Calu3 (cell line): ENCODE measurements at regions of chr6 and their contacts with region 1.

Region 1: DNA sequence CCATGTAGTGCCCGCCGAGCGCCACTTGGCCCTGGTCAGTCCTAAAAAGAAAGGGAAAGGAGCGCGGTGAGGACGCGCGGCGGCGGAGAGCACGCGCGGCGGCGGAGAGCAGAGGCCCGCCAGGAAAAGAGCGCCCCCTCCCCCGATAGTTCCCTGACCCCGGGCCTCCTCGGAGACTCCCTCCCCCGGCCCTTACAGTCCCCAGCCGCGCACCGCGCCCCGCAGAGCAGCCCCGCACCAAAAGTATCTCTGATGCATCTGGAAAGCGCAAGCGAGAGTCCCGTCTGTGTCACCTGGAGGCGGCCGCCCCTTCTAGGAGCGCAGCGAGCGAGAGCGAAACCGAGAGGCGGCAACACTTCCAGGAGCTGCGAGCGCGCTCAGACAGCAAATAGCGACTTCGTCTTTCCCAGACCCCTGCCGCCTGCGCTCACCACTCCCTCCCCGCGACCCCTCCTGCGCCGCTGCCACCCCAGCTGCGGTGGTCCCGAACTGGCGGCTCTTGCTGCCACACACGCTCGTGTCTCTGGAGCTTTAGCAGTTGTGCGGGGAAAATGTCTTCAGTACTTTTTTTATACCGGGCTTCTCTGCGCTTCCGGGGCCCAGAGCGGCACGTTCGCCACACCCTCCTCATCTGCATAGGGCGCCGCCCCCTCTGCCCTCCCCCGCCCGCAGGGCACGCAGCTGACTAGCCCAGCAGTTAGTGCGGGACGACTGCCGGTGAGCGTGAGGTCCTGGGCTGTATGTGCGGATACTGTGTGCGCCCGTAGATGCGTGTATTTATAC is at the start of gene TENT5A:
- DNase-seq: peak; percentile 94
- H3K4me3 Mint-ChIP-seq: peak within 1 kb of the TSS; percentile 98
- H3K27ac Mint-ChIP-seq: peak within 1 kb of the TSS; percentile 54
- H3K4me1 Mint-ChIP-seq: peaks cover 33% of the 10 kb centered on the region
- H3K27me3 Mint-ChIP-seq: peaks cover 9% of the 10 kb centered on the region
- CTCF ChIP-seq: no peak
- total RNA-seq, gene TENT5A: 9.7 and 17.4 TPM in 2 replicates

Region 2: DNA sequence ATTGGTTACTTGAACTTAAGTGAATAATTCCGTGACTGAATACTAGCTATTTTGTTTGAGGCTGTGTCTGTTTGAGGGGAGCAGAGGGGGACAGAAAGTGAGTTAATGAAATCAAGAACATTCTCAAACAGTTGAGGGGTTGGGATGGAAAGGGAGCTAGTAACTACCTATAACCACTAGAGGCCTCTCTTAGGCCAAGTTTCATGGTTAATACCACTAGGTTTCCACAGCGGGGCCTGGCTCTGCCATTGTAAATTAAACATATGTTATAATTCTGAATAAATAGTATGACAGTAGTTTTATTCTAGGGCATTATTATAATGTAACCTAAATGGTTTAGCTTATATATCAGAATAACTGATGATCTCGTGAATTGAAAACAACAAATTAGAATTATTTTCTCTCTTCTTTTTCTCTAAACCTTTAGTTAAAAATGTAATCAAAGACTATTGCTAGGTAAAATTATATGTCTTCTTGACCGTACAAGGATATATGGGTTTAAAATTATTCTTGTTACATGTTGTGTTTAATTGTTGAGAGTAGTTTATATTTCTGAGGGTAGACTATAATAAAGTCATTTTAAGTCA is 1537.8 kb before region 1 on chr6:
- CTCF ChIA-PET with region 1: no interaction called
- intact Hi-C with region 1: loop called (anchors 10 kb)
- DNase-seq: peak; percentile 39
- H3K4me3 Mint-ChIP-seq: no peak overlapping the region
- H3K27ac Mint-ChIP-seq: no peak overlapping the region
- H3K4me1 Mint-ChIP-seq: peaks cover 22% of the 10 kb centered on the region
- H3K27me3 Mint-ChIP-seq: no peaks in the 10 kb centered on the region
- CTCF ChIP-seq: peak; percentile 56

Region 3: DNA sequence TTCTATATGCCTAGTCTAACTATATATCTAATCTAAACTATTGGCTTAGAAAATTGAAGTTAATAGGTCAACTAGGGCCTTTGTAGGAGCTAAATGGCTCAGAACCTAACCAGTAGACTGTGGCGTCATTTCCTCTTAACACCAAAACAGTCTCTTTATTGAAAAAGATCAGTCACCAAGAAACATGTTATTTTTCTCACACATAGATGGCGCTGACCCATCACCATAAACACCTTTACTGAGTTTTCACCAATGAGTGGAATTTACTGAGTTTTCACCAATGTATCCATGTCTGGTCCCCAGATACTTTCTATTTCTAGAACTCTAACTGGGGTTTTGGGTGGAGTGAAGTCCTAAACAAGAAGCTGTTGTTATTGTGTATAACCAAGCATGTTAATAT is 1009.8 kb before region 1 on chr6:
- CTCF ChIA-PET with region 1: no interaction called
- intact Hi-C with region 1: loop called (anchors 5 kb)
- DNase-seq: peak; percentile 13
- H3K4me3 Mint-ChIP-seq: no peak overlapping the region
- H3K27ac Mint-ChIP-seq: no peak overlapping the region
- H3K4me1 Mint-ChIP-seq: no peaks in the 10 kb centered on the region
- H3K27me3 Mint-ChIP-seq: no peaks in the 10 kb centered on the region
- CTCF ChIP-seq: peak; percentile 38

Region 4: DNA sequence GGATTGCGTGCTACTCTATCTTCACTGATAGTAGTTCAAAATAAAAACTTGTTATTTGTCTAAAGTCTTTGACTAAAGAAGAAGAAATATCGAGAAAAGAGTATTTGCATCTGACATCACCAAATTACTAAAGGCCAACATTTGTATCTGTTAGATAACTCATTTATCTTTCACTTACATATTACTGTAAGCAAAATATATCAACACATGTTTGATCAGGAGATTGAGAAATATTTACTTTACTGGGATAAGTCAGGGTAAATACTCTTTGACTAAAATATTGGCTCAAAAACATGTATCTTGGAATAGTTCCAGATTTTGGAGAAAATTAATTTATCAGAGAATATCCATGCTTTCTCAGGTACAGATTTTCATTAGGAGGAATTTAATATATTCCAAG is 305.8 kb before region 1 on chr6:
- CTCF ChIA-PET with region 1: no interaction called
- intact Hi-C with region 1: loop called (anchors 5 kb)
- DNase-seq: no peak
- H3K4me3 Mint-ChIP-seq: no peak overlapping the region
- H3K27ac Mint-ChIP-seq: no peak overlapping the region
- H3K4me1 Mint-ChIP-seq: peaks cover 15% of the 10 kb centered on the region
- H3K27me3 Mint-ChIP-seq: no peaks in the 10 kb centered on the region
- CTCF ChIP-seq: no peak

Region 5: DNA sequence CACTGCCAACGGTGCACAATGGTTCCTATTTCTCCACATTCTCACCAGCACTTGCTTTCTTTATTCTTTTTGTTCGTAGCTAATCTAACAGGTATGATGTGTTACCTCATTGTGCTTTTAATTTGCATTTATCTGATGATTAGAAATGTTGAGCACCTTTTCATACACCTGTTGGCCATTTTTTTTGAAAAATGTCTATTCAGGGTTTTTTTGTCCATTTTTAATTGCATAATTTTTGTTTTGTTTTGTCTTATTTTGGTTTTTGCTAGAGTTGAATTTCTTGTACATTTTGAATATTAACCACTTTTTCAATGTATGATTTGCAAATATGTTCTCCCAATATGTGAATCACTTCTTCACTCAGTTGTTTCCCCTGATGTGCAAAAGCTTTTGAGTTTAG is 150.4 kb before region 1 on chr6:
- CTCF ChIA-PET with region 1: no interaction called
- intact Hi-C with region 1: no loop called
- DNase-seq: no peak
- H3K4me3 Mint-ChIP-seq: no peak overlapping the region
- H3K27ac Mint-ChIP-seq: no peak overlapping the region
- H3K4me1 Mint-ChIP-seq: no peaks in the 10 kb centered on the region
- H3K27me3 Mint-ChIP-seq: no peaks in the 10 kb centered on the region
- CTCF ChIP-seq: no peak

Region 6: GRCh38 chr6:81668615-81669047 is 83.7 kb before region 1 on chr6:
- CTCF ChIA-PET with region 1: no interaction called
- intact Hi-C with region 1: no loop called
- DNase-seq: no peak
- H3K4me3 Mint-ChIP-seq: no peak overlapping the region
- H3K27ac Mint-ChIP-seq: no peak overlapping the region
- H3K4me1 Mint-ChIP-seq: no peaks in the 10 kb centered on the region
- H3K27me3 Mint-ChIP-seq: no peaks in the 10 kb centered on the region
- CTCF ChIP-seq: no peak

Region 7: DNA sequence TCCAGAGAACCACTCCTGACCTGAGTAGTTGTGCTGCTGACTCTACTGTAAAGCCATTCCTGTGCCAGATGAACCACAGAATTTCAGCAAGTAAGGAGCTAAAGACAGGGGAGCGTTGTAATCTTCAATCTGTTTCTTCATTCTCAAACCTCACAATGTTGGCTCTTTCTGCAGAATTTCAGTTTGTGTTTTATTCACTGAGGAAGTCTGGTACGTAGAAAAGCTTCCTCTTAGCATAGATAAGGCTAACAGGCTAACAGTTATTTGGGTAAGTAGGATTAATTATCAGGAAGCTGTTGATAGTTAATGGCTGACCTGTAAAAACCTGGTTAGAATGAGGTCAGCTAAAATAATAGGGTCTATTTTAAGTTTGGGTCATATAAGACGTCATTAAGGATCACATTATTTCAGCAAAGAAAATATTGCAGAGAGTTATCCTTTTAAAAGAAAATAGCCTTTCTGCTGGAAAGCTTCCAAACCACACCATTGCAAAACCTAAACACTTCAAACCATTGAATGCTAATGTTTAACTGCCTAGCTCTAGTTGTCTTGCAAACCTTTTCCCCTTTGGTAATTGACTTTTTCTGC is 14.2 kb after region 1 on chr6:
- CTCF ChIA-PET with region 1: interaction called, 14 read pairs
- intact Hi-C with region 1: no loop called
- DNase-seq: peak; percentile 67
- H3K4me3 Mint-ChIP-seq: peak overlapping the region; percentile 29
- H3K27ac Mint-ChIP-seq: peak overlapping the region; percentile 78
- H3K4me1 Mint-ChIP-seq: peaks cover 28% of the 10 kb centered on the region
- H3K27me3 Mint-ChIP-seq: peaks cover 13% of the 10 kb centered on the region
- CTCF ChIP-seq: no peak

Region 8: GRCh38 chr6:81777586-81778268 is 25.4 kb after region 1 on chr6:
- CTCF ChIA-PET with region 1: no interaction called
- intact Hi-C with region 1: no loop called
- DNase-seq: no peak
- H3K4me3 Mint-ChIP-seq: no peak overlapping the region
- H3K27ac Mint-ChIP-seq: no peak overlapping the region
- H3K4me1 Mint-ChIP-seq: peaks cover 34% of the 10 kb centered on the region
- H3K27me3 Mint-ChIP-seq: peaks cover 12% of the 10 kb centered on the region
- CTCF ChIP-seq: no peak

Region 9: GRCh38 chr6:81938014-81938856 is 185.9 kb after region 1 on chr6:
- CTCF ChIA-PET with region 1: no interaction called
- intact Hi-C with region 1: loop called (anchors 2 kb)
- DNase-seq: peak; percentile 58
- H3K4me3 Mint-ChIP-seq: peak overlapping the region; percentile 62
- H3K27ac Mint-ChIP-seq: peak overlapping the region; percentile 98
- H3K4me1 Mint-ChIP-seq: peaks cover 55% of the 10 kb centered on the region
- H3K27me3 Mint-ChIP-seq: no peaks in the 10 kb centered on the region
- CTCF ChIP-seq: no peak